CD8-positive, alpha-beta T cell (primary cell): ENCODE measurements at regions of chr6 and their contacts with region 1.

Region 1: GRCh38 chr6:170295510-170296422 is 4.9 kb upstream of the DLL1 start:
- DNase-seq: peak in 4 of 9 experiments; percentile 39 to 68 (median 57)
- ATAC-seq: peak; percentile 46
- H3K4me3 ChIP-seq: peak overlapping the region; percentile 33 to 47
- H3K4me3 Mint-ChIP-seq: peak overlapping the region; percentile 73
- H3K27ac ChIP-seq: no peak overlapping the region
- H3K27ac Mint-ChIP-seq: no peak overlapping the region
- H3K4me1 ChIP-seq: peaks cover 46% of the 10 kb centered on the region
- H3K4me1 Mint-ChIP-seq: peaks cover 40% of the 10 kb centered on the region
- H3K27me3 ChIP-seq: peaks cover 8 to 37% of the 10 kb centered on the region in 2 experiments
- H3K27me3 Mint-ChIP-seq: peaks cover 42% of the 10 kb centered on the region
- CTCF ChIP-seq: no peak

Region 2: GRCh38 chr6:169789982-169790927 is 505.5 kb before region 1 on chr6:
- CTCF ChIA-PET with region 1: interaction called, 4 read pairs
- POLR2A ChIA-PET with region 1: no interaction called
- intact Hi-C with region 1: loop called in 1 of 2 experiments (anchors 2 kb)
- DNase-seq: peak; percentile 57 to 84 (median 73)
- ATAC-seq: peak; percentile 98
- H3K4me3 ChIP-seq: peak overlapping the region; percentile 46 to 58
- H3K4me3 Mint-ChIP-seq: peak overlapping the region; percentile 86
- H3K27ac ChIP-seq: no peak overlapping the region
- H3K27ac Mint-ChIP-seq: no peak overlapping the region
- H3K4me1 ChIP-seq: peaks cover 8% of the 10 kb centered on the region
- H3K4me1 Mint-ChIP-seq: peaks cover 16% of the 10 kb centered on the region
- H3K27me3 ChIP-seq: peaks cover 0 to 6% of the 10 kb centered on the region in 2 experiments
- H3K27me3 Mint-ChIP-seq: peaks cover 38% of the 10 kb centered on the region
- CTCF ChIP-seq: peak; percentile 93

Region 3: DNA sequence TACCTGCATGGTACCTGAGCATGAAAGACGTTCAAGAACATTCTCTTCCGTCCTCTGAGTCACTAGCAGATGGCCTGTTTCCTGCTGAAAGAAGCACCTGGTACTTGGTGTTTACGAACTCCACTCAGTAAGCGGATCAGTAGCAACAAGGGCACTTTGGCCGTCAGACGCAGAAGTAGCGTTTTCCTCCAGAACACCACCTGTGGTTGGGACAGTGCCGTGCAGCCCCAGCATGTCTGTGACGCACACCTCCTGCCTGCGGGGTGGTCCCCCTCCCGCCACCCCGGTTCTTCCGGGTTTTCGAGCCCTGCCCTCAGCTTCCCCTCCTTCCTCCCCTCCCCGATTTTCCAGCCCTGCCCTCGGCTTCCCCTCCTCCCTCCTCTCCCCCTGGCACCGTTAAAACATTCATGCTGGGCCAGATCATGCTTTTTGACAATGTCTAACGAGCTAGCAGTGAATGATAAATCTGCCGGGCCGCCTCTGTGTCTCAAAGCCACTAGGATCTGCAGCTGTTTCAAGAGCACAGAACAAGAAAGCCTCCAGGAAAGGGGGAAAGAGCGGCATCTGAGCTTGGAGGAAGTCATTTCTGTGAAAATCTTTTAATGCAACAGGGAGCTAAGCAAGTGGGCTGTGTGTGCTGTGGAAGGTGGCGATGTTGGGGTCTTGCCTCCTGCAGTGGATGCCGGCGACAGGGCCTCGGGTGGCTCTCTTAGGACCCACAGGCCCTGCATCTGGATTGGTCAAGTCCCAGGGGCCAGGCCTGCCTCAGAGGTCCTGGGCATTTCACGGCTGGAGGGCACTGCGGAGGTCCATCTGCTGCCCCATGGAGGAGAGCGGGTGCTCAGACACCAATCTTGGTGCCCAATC is 336.4 kb before region 1 on chr6:
- CTCF ChIA-PET with region 1: interaction called, 6 read pairs
- POLR2A ChIA-PET with region 1: interaction called, 3 read pairs
- intact Hi-C with region 1: loop called in 1 of 2 experiments (anchors 2 kb)
- DNase-seq: peak; percentile 42 to 90 (median 61)
- ATAC-seq: peak; percentile 93
- H3K4me3 ChIP-seq: peak overlapping the region; percentile 0 to 3
- H3K4me3 Mint-ChIP-seq: peak overlapping the region; percentile 65
- H3K27ac ChIP-seq: peak overlapping the region; percentile 50 to 53
- H3K27ac Mint-ChIP-seq: peak overlapping the region; percentile 94
- H3K4me1 ChIP-seq: peaks cover 15% of the 10 kb centered on the region
- H3K4me1 Mint-ChIP-seq: peaks cover 26% of the 10 kb centered on the region
- H3K27me3 ChIP-seq: peaks cover 0 to 7% of the 10 kb centered on the region in 2 experiments
- H3K27me3 Mint-ChIP-seq: peaks cover 3% of the 10 kb centered on the region
- CTCF ChIP-seq: peak; percentile 33

Region 4: DNA sequence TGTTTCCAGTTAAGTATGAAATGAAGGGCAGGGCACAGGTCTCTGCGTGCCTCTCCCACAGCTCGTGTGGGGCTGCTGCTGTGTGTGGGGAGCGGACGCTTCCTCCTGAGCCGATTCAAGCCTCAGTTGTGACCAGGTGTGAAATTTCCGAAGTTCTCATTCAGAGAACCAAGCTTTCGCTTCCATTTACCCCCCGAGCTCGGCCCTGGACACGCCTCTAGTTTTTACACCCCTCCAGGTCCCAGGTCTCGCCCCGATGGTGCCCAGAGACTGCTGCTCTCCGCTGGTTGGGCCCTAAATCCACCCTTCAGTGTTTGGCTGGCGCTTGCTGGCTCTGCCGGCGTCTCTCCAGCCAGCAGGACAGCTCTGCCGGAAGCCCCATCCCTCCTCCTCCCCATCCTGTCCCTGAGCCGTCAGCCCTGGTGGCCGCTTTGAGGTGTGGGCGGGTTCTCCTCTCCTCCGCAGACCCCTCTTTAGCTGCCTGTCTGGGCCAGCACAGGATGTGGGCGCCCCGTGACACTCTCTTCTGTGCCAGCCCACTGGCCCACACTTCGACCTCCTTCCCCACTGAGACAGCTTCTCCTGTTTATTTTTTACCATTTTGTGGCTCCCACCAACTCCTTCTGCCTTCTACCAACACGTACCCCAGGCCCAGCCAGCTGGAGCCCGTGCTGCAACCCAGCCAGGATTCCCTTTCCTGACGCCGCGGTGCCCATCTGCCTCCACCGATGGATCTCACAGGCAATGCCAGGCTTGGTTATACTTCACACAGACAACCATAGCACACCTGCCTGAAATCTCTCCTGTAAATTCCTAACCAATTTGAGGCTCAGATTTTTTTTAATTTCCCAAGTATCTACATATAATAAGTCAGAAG is 147.7 kb before region 1 on chr6:
- CTCF ChIA-PET with region 1: no interaction called
- POLR2A ChIA-PET with region 1: no interaction called
- intact Hi-C with region 1: loop called in 1 of 2 experiments (anchors 1 kb)
- DNase-seq: peak; percentile 27 to 86 (median 69)
- ATAC-seq: peak; percentile 81
- H3K4me3 ChIP-seq: peak overlapping the region; percentile 35 to 46
- H3K4me3 Mint-ChIP-seq: peak overlapping the region; percentile 80
- H3K27ac ChIP-seq: peak overlapping the region; percentile 54 to 76
- H3K27ac Mint-ChIP-seq: peak overlapping the region; percentile 93
- H3K4me1 ChIP-seq: peaks cover 85% of the 10 kb centered on the region
- H3K4me1 Mint-ChIP-seq: peaks cover 70% of the 10 kb centered on the region
- H3K27me3 ChIP-seq: peaks cover 0 to 4% of the 10 kb centered on the region in 2 experiments
- H3K27me3 Mint-ChIP-seq: peaks cover 4% of the 10 kb centered on the region
- CTCF ChIP-seq: no peak

Region 5: DNA sequence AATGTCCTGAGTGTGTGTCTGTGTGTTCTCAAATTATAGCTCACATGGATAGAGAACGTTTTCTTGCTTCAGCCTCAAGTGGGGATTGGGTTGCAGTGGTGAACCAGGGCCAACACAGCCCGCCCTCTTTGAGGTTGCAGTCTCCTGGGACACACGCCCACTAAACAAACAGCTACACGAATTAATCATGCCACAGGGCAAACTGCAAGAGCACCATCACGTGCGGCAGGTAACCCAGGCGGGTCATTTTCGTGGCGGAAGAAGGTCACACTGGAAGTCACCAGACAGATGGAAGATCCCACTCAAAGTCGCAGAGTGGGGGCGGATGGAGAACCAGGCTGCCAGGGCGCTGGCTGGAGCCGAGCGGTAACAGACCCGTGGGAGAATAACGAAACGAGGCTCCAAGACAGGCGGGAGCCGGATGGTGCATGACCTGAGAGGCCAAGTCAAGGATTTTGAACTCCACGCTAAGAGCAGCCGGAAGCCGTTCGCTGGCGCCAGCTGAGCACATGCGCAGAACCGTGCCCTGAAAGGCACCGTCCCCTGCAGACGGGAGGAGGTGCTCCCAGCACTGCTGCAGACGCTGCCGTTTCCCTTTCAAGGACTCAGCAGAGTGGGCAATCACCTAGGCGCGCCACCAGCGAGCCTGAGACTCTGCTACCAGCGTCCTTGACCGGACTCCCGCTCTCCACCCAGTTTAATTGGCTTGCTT is 15.6 kb before region 1 on chr6:
- CTCF ChIA-PET with region 1: interaction called, 15 read pairs
- POLR2A ChIA-PET with region 1: interaction called, 5 read pairs
- intact Hi-C with region 1: loop called in 1 of 2 experiments (anchors 1 kb)
- DNase-seq: peak in 7 of 9 experiments; percentile 31 to 84 (median 63)
- ATAC-seq: peak; percentile 77
- H3K4me3 ChIP-seq: peak overlapping the region; percentile 25 to 47
- H3K4me3 Mint-ChIP-seq: peak overlapping the region; percentile 79
- H3K27ac ChIP-seq: peak overlapping the region; percentile 55 to 67
- H3K27ac Mint-ChIP-seq: peak overlapping the region; percentile 92
- H3K4me1 ChIP-seq: peaks cover 36% of the 10 kb centered on the region
- H3K4me1 Mint-ChIP-seq: peaks cover 38% of the 10 kb centered on the region
- H3K27me3 ChIP-seq: peaks cover 0 to 4% of the 10 kb centered on the region in 2 experiments
- H3K27me3 Mint-ChIP-seq: no peaks in the 10 kb centered on the region
- CTCF ChIP-seq: no peak